Activated T-helper 2 cell treated with anti-CD3 and anti-CD28 coated beads, Interferon-gamma antibody, Interleukin-2, Interleukin-4, amounts not matched to agents 10 μg/mL and 5 μg/mL and 100 μg/mL, durations not matched to agents 14 hours and 24 hours and 36 hours (primary cell): ENCODE measurements at regions of chr19 and their contacts with region 1.

Region 1: GRCh38 chr19:572140-572742 is at the start of gene BSG:
- DNase-seq: peak; percentile 99
- H3K4me3 Mint-ChIP-seq: peak within 1 kb of the TSS; percentile 86
- H3K27ac Mint-ChIP-seq: peak within 1 kb of the TSS; percentile 94
- H3K4me1 Mint-ChIP-seq: peaks cover 24% of the 10 kb centered on the region
- H3K27me3 Mint-ChIP-seq: no peaks in the 10 kb centered on the region
- total RNA-seq, gene BSG: 300 and 304 TPM in 2 replicates

Region 2: DNA sequence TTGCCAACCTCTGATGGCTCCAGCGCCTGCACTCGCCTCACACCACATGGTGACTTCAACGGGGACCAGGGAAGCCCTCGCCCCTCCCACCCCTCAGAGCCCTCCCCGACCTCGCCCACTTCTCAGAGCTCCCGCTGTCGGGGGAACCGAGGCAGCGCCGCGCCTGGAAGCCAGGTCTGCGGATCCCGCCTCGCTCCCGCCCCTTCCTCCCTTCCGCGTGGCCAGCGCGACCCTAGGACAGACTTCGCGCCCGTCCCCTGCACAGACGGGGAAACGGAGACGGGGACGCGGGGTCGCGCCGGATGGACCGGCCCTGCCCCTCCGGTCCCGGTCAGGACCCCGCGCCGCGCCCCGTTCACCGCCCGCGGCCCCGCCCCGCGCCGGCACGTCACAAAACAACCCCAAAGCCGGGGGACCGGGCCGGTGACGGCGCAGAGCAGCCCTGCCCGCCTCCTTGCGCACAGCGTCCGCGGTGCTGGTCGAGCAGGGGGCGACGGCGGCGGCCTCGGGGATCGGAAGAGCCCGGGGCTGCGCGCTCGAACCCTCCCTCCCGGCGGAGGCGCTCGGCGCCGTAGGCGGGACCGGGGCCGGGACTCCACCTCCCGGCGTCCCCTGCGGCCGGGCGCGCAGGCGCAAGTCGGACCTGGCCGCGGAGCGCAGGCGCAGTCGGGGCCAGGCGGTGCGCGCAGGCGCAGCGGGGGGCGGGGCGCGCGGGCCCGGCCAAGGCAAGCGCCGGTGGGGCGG is 41.1 kb before region 1 on chr19:
- intact Hi-C with region 1: loop called (anchors 2 kb)
- DNase-seq: peak; percentile 90
- H3K4me3 Mint-ChIP-seq: peak overlapping the region; percentile 83
- H3K27ac Mint-ChIP-seq: peak overlapping the region; percentile 88
- H3K4me1 Mint-ChIP-seq: peaks cover 4% of the 10 kb centered on the region
- H3K27me3 Mint-ChIP-seq: peaks cover 1% of the 10 kb centered on the region

Region 3: GRCh38 chr19:610801-611505 is 38.7 kb after region 1 on chr19:
- intact Hi-C with region 1: loop called (anchors 1 kb)
- DNase-seq: peak; percentile 63
- H3K4me3 Mint-ChIP-seq: peak overlapping the region; percentile 88
- H3K27ac Mint-ChIP-seq: peak overlapping the region; percentile 97
- H3K4me1 Mint-ChIP-seq: peaks cover 11% of the 10 kb centered on the region
- H3K27me3 Mint-ChIP-seq: no peaks in the 10 kb centered on the region